ENCODE measurements at regions of chr11 and their contacts with region 1.

Region 1: GRCh38 chr11:19561011-19561410 is 151.6 kb upstream of the NAV2 start:
- DNase-seq: no peak
- H3K4me3 ChIP-seq: no peak overlapping the region
- H3K4me3 Mint-ChIP-seq: no peak overlapping the region
- H3K27ac ChIP-seq: no peak overlapping the region
- H3K27ac Mint-ChIP-seq: no peak overlapping the region
- H3K4me1 ChIP-seq: no peaks in the 10 kb centered on the region
- H3K4me1 Mint-ChIP-seq: peaks cover 0 to 4% (median 2%) of the 10 kb centered on the region in 4 donors
- H3K27me3 ChIP-seq: no peaks in the 10 kb centered on the region
- H3K27me3 Mint-ChIP-seq: peaks cover 2 to 18% of the 10 kb centered on the region in 2 donors

Region 2: GRCh38 chr11:19573666-19574065 is 12.7 kb after region 1 on chr11:
- CTCF ChIA-PET with region 1: interaction called, 23 read pairs
- POLR2A ChIA-PET with region 1: no interaction called
- intact Hi-C with region 1: no loop called
- DNase-seq: no peak
- H3K4me3 ChIP-seq: no peak overlapping the region
- H3K4me3 Mint-ChIP-seq: no peak overlapping the region
- H3K27ac ChIP-seq: no peak overlapping the region
- H3K27ac Mint-ChIP-seq: no peak overlapping the region
- H3K4me1 ChIP-seq: no peaks in the 10 kb centered on the region
- H3K4me1 Mint-ChIP-seq: peaks cover 0 to 4% (median 0%) of the 10 kb centered on the region in 4 donors
- H3K27me3 ChIP-seq: no peaks in the 10 kb centered on the region
- H3K27me3 Mint-ChIP-seq: peaks cover 4 to 8% of the 10 kb centered on the region in 2 donors

Region 3: DNA sequence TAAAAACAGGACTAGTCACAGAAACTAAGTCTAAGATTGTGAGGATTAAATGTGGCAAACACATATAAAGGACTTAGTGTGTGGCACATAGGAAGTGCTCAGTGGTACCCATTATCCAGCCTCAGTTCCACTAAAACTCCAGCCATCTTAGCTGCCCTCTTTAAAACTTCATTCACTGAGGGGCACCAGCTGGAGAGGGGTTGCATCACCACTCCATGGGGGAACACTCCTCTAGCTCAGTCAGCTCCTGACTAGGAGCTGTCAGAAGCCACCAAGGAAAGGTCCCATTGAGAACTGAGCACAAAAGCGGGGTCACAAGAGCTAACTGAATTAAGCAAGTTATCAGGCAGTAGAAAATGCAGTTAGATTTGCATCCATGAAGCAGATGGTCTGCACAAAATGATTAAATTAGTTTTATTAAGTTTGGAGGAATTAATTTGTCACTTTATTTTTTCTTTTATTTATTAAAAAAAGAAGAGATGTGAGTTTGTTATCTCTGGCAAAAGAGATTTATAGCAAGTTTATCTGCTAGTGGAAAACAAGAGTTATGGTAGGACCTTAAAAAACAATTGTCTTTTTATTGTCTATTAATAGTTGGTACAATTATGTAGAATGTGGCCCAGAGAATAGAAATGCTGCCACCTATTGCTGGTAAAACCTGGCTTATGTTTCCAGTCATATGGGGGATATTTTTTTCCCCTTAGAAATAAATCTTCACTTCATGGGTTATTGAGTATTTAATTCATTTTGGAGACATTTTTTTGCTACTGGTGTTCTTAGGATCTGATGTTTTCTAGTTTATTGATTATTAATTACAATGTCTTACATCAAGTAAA is 247.3 kb after region 1 on chr11:
- CTCF ChIA-PET with region 1: interaction called, 3 read pairs
- POLR2A ChIA-PET with region 1: no interaction called
- intact Hi-C with region 1: loop called (anchors 1 kb)
- DNase-seq: no peak
- H3K4me3 ChIP-seq: no peak overlapping the region
- H3K4me3 Mint-ChIP-seq: no peak overlapping the region
- H3K27ac ChIP-seq: no peak overlapping the region
- H3K27ac Mint-ChIP-seq: no peak overlapping the region
- H3K4me1 ChIP-seq: no peaks in the 10 kb centered on the region
- H3K4me1 Mint-ChIP-seq: no peaks in the 10 kb centered on the region
- H3K27me3 ChIP-seq: no peaks in the 10 kb centered on the region
- H3K27me3 Mint-ChIP-seq: peaks cover 2 to 4% of the 10 kb centered on the region in 2 donors

Region 4: GRCh38 chr11:19903620-19904069 is 342.6 kb after region 1 on chr11:
- CTCF ChIA-PET with region 1: interaction called, 20 read pairs
- POLR2A ChIA-PET with region 1: no interaction called
- intact Hi-C with region 1: loop called (anchors 1 kb)
- DNase-seq: peak in 4 of 5 donors; percentile 8 to 27 (median 19)
- H3K4me3 ChIP-seq: no peak overlapping the region
- H3K4me3 Mint-ChIP-seq: no peak overlapping the region
- H3K27ac ChIP-seq: no peak overlapping the region
- H3K27ac Mint-ChIP-seq: no peak overlapping the region
- H3K4me1 ChIP-seq: no peaks in the 10 kb centered on the region
- H3K4me1 Mint-ChIP-seq: no peaks in the 10 kb centered on the region
- H3K27me3 ChIP-seq: no peaks in the 10 kb centered on the region
- H3K27me3 Mint-ChIP-seq: peaks cover 0 to 2% of the 10 kb centered on the region in 2 donors

Measured in CD4-positive, alpha-beta memory T cell (primary cell).